PC-9 (cell line): ENCODE measurements at regions of chr7 and their contacts with region 1.

Region 1: DNA sequence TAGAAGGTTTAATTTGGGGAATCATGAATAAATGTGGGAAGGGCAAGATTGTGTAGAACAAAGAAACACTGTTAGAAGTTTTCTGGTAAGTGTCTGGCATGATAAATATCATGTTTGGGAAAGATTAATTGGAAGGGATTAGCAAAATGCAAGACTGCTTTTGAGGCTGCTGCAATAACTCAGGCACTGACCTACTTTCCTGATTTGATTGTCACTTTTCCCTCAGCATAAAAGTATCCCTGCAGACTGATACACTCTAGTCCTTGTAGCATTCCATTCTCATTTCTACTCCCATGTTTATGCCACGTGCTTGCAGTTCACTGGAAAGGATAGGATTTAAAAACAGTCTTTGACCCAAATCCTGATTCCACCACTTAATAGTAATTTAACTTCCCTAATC is 303.3 kb upstream of the SEMA3A start:
- DNase-seq: no peak
- H3K4me3 ChIP-seq: no peak overlapping the region
- H3K27ac ChIP-seq: no peak overlapping the region
- H3K4me1 ChIP-seq: no peaks in the 10 kb centered on the region
- H3K27me3 ChIP-seq: no peaks in the 10 kb centered on the region
- CTCF ChIP-seq: no peak

Region 2: GRCh38 chr7:84536240-84536895 is 38.5 kb after region 1 on chr7:
- CTCF ChIA-PET with region 1: no interaction called
- POLR2A ChIA-PET with region 1: no interaction called
- intact Hi-C with region 1: no loop called
- DNase-seq: peak in 1 of 2 experiments; percentile 70
- H3K4me3 ChIP-seq: no peak overlapping the region
- H3K27ac ChIP-seq: no peak overlapping the region
- H3K4me1 ChIP-seq: peaks cover 11% of the 10 kb centered on the region
- H3K27me3 ChIP-seq: no peaks in the 10 kb centered on the region
- CTCF ChIP-seq: no peak

Region 3: DNA sequence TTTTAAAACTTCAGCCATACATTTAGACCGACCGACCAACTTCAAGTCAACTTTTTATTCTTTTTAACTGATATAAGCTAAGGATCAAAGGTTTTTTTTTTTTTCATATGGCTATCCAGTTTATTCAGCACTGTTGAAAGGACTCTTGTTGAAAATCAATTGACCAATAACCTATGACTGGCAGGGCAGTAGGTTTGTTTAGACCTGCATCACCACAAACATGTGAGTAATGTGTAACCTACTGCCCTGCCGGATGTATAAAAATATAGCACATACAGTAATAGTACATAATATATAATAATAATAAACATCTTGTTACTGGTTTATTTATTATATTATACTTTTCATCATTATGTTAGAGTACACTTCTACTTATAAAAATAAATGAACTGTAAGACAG is 131.3 kb after region 1 on chr7:
- CTCF ChIA-PET with region 1: no interaction called
- POLR2A ChIA-PET with region 1: interaction called, 11 read pairs
- intact Hi-C with region 1: no loop called
- DNase-seq: no peak
- H3K4me3 ChIP-seq: no peak overlapping the region
- H3K27ac ChIP-seq: no peak overlapping the region
- H3K4me1 ChIP-seq: no peaks in the 10 kb centered on the region
- H3K27me3 ChIP-seq: no peaks in the 10 kb centered on the region
- CTCF ChIP-seq: no peak

Region 4: GRCh38 chr7:84823530-84823929 is 325.7 kb after region 1 on chr7:
- CTCF ChIA-PET with region 1: no interaction called
- POLR2A ChIA-PET with region 1: no interaction called
- intact Hi-C with region 1: no loop called
- DNase-seq: no peak
- H3K4me3 ChIP-seq: no peak overlapping the region
- H3K27ac ChIP-seq: no peak overlapping the region
- H3K4me1 ChIP-seq: no peaks in the 10 kb centered on the region
- H3K27me3 ChIP-seq: no peaks in the 10 kb centered on the region
- CTCF ChIP-seq: no peak